ENCODE measurements at regions of chr2 and their contacts with region 1.

Region 1: GRCh38 chr2:71798266-71799012 is 345.1 kb downstream of the DYSF start:
- DNase-seq: peak; percentile 76
- ATAC-seq: peak; percentile 84
- H3K4me3 Mint-ChIP-seq: no peak overlapping the region
- H3K27ac Mint-ChIP-seq: no peak overlapping the region
- H3K4me1 Mint-ChIP-seq: no peaks in the 10 kb centered on the region
- H3K27me3 Mint-ChIP-seq: no peaks in the 10 kb centered on the region
- CTCF ChIP-seq: peak; percentile 87

Region 2: GRCh38 chr2:71530641-71531332 is 267.7 kb before region 1 on chr2:
- CTCF ChIA-PET with region 1: interaction called, 15 read pairs
- POLR2A ChIA-PET with region 1: no interaction called
- DNase-seq: peak; percentile 61
- ATAC-seq: peak; percentile 85
- H3K4me3 Mint-ChIP-seq: no peak overlapping the region
- H3K27ac Mint-ChIP-seq: no peak overlapping the region
- H3K4me1 Mint-ChIP-seq: peaks cover 22% of the 10 kb centered on the region
- H3K27me3 Mint-ChIP-seq: no peaks in the 10 kb centered on the region
- CTCF ChIP-seq: peak; percentile 54

Region 3: GRCh38 chr2:71551631-71551915 is 246.9 kb before region 1 on chr2:
- CTCF ChIA-PET with region 1: interaction called, 31 read pairs
- POLR2A ChIA-PET with region 1: no interaction called
- DNase-seq: no peak
- ATAC-seq: no peak
- H3K4me3 Mint-ChIP-seq: no peak overlapping the region
- H3K27ac Mint-ChIP-seq: no peak overlapping the region
- H3K4me1 Mint-ChIP-seq: no peaks in the 10 kb centered on the region
- H3K27me3 Mint-ChIP-seq: no peaks in the 10 kb centered on the region
- CTCF ChIP-seq: no peak

Region 4: GRCh38 chr2:71671895-71672825 is 126.3 kb before region 1 on chr2:
- CTCF ChIA-PET with region 1: interaction called, 16 read pairs
- POLR2A ChIA-PET with region 1: no interaction called
- DNase-seq: peak; percentile 62
- ATAC-seq: peak; percentile 93
- H3K4me3 Mint-ChIP-seq: no peak overlapping the region
- H3K27ac Mint-ChIP-seq: peak overlapping the region; percentile 71
- H3K4me1 Mint-ChIP-seq: no peaks in the 10 kb centered on the region
- H3K27me3 Mint-ChIP-seq: no peaks in the 10 kb centered on the region
- CTCF ChIP-seq: no peak

Region 5: GRCh38 chr2:71894261-71894660 is 95.8 kb after region 1 on chr2:
- CTCF ChIA-PET with region 1: interaction called, 11 read pairs
- POLR2A ChIA-PET with region 1: no interaction called
- DNase-seq: peak; percentile 42
- ATAC-seq: peak; percentile 74
- H3K4me3 Mint-ChIP-seq: no peak overlapping the region
- H3K27ac Mint-ChIP-seq: no peak overlapping the region
- H3K4me1 Mint-ChIP-seq: no peaks in the 10 kb centered on the region
- H3K27me3 Mint-ChIP-seq: peaks cover 5% of the 10 kb centered on the region; the same call in 1 of the 2 replicates
- CTCF ChIP-seq: no peak

Region 6: DNA sequence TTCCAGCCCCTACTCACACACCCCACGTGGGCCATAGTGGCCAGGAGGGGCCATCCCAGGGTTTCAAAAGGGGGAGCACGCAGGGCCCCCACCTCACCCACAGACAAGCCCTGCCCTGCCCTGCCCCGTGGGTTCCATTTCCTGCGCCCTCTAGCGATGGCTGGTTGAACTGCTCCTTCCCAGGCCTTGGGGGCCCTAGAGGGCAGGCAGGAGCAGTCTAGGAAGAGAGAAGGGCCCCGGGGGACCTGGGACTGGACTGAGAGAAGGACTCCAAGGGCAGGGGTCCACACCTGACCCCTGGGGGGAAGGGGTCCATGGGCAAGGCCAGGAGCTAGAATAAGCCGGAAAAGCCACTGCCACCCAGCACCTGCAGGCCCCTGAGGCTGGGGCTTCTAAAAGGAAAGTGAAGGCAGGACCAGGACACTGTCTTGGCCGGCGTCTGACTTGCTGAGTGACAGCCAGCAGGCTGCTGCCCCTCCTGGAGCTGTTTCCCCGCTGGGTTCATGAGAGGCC is 339.1 kb after region 1 on chr2:
- CTCF ChIA-PET with region 1: interaction called, 10 read pairs
- POLR2A ChIA-PET with region 1: no interaction called
- DNase-seq: peak; percentile 91
- ATAC-seq: peak; percentile 89
- H3K4me3 Mint-ChIP-seq: no peak overlapping the region
- H3K27ac Mint-ChIP-seq: no peak overlapping the region
- H3K4me1 Mint-ChIP-seq: peaks cover 8% of the 10 kb centered on the region
- H3K27me3 Mint-ChIP-seq: peaks cover 39% of the 10 kb centered on the region
- CTCF ChIP-seq: peak; percentile 97

Measured in WTC11 (cell line).